ENCODE measurements at regions of chr17 and their contacts with region 1.

Region 1: DNA sequence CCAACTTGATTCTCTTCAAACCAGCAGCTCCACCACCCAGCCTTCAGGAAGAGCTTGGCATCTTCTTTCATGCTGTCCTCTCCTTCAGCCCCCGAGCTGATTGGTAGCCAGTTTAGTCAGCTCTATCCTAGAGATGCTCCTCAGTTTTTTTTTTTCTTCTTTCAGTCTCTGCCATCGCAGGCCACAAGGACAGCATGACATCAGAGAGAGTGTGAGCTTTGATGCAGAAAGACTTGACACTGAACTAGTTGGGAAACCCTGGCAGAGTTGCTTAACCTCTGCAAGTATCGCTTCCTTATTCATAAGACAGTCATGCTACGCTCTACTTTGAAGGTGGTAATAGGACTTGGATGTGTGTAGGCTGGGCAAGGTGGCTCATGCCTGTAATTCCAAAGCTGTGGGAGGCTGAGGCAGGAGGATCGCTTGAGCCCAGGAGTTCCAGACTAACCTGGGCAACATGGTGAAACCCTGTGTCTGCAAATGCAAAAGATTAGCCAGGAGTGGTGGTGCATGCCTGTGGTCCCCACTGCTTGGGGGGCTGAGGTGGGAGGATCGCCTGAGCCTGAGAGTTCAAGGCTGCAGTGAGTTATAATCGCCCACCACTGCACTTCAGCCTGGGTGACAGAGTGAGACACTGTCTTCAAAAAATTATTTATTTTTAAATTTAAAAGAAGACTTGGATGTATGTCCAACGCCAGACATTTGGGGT is 2.6 kb downstream of the CD300LB start:
- H3K4me3 Mint-ChIP-seq: no peak overlapping the region
- H3K27ac Mint-ChIP-seq: peak overlapping the region; percentile 83
- H3K4me1 Mint-ChIP-seq: peaks cover 92% of the 10 kb centered on the region
- H3K27me3 Mint-ChIP-seq: no peaks in the 10 kb centered on the region

Region 2: GRCh38 chr17:74368092-74369081 is 160.3 kb before region 1 on chr17:
- intact Hi-C with region 1: loop called (anchors 1 kb)
- H3K4me3 Mint-ChIP-seq: no peak overlapping the region
- H3K27ac Mint-ChIP-seq: peak overlapping the region; percentile 53
- H3K4me1 Mint-ChIP-seq: peaks cover 19% of the 10 kb centered on the region
- H3K27me3 Mint-ChIP-seq: peaks cover 61% of the 10 kb centered on the region

Region 3: GRCh38 chr17:74379495-74380085 is 149.1 kb before region 1 on chr17:
- intact Hi-C with region 1: loop called (anchors 1 kb)
- H3K4me3 Mint-ChIP-seq: no peak overlapping the region
- H3K27ac Mint-ChIP-seq: no peak overlapping the region
- H3K4me1 Mint-ChIP-seq: peaks cover 12% of the 10 kb centered on the region
- H3K27me3 Mint-ChIP-seq: peaks cover 33% of the 10 kb centered on the region

Region 4: GRCh38 chr17:74457146-74457819 is 71.4 kb before region 1 on chr17:
- intact Hi-C with region 1: loop called (anchors 2 kb)
- H3K4me3 Mint-ChIP-seq: no peak overlapping the region
- H3K27ac Mint-ChIP-seq: no peak overlapping the region
- H3K4me1 Mint-ChIP-seq: peaks cover 57% of the 10 kb centered on the region
- H3K27me3 Mint-ChIP-seq: peaks cover 20% of the 10 kb centered on the region

Region 5: GRCh38 chr17:74467221-74467951 is 61.3 kb before region 1 on chr17:
- intact Hi-C with region 1: loop called (anchors 2 kb)
- H3K4me3 Mint-ChIP-seq: no peak overlapping the region
- H3K27ac Mint-ChIP-seq: no peak overlapping the region
- H3K4me1 Mint-ChIP-seq: peaks cover 53% of the 10 kb centered on the region
- H3K27me3 Mint-ChIP-seq: no peaks in the 10 kb centered on the region

Region 6: GRCh38 chr17:74493381-74493833 is 35.2 kb before region 1 on chr17:
- intact Hi-C with region 1: loop called (anchors 1 kb)
- H3K4me3 Mint-ChIP-seq: no peak overlapping the region
- H3K27ac Mint-ChIP-seq: no peak overlapping the region
- H3K4me1 Mint-ChIP-seq: peaks cover 57% of the 10 kb centered on the region
- H3K27me3 Mint-ChIP-seq: peaks cover 2% of the 10 kb centered on the region

Region 7: GRCh38 chr17:74513987-74514631 is 14.5 kb before region 1 on chr17:
- intact Hi-C with region 1: loop called (anchors 2 kb)
- H3K4me3 Mint-ChIP-seq: no peak overlapping the region
- H3K27ac Mint-ChIP-seq: peak overlapping the region; percentile 89
- H3K4me1 Mint-ChIP-seq: peaks cover 63% of the 10 kb centered on the region
- H3K27me3 Mint-ChIP-seq: no peaks in the 10 kb centered on the region

Region 8: GRCh38 chr17:75087558-75088453 is 559.2 kb after region 1 on chr17 and contains the start of gene SLC16A5:
- intact Hi-C with region 1: no loop called
- H3K4me3 Mint-ChIP-seq: peak within 1 kb of the TSS; percentile 95
- H3K27ac Mint-ChIP-seq: peak within 1 kb of the TSS; percentile 93
- H3K4me1 Mint-ChIP-seq: peaks cover 70% of the 10 kb centered on the region
- H3K27me3 Mint-ChIP-seq: no peaks in the 10 kb centered on the region